SK-N-SH (cell line): ENCODE measurements at regions of chr15 and their contacts with region 1.

Region 1: DNA sequence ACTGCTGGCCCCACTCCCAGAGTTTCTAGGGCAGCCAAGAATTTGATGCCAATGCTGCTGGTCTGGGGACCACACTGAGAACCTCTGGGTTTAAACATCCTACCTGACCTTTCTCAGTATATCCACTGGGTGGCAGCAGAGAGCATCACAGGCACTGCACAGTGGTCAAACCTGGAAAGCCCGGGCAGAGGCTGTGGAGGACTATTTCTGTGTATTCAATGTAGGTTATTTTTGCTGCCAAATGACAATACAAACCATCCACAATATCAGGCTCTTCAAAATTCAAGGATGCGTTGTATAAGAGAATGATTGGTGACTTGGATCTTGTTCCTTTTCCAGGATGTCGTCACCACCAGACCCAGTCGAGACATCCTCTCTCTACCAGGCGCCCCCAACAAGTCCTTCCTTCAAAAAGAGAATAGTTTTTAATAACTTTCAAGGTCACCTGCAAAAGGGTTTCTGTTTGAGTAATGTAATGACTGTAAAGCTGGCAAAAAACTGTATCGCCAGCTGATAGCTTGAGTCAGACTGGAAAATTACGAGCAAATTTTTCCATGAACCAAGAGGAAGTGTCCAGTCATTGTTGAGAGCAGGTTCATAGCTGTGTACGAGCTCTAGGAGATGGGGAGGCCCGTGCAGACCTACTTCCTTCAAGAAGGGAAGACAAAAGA is 30.5 kb upstream of the MYZAP start:
- DNase-seq: peak; percentile 73
- H3K4me3 ChIP-seq: peak overlapping the region in 1 of 2 experiments; percentile 11; a peak in 1 of 4 replicates
- H3K27ac ChIP-seq: peak overlapping the region in 1 of 2 experiments; percentile 34; a peak in 1 of 4 replicates
- H3K4me1 ChIP-seq: peaks cover 0 to 9% of the 10 kb centered on the region in 2 experiments; a peak in 1 of 4 replicates
- H3K27me3 ChIP-seq: no peaks in the 10 kb centered on the region
- CTCF ChIP-seq: peak; percentile 91
- EP300 ChIP-seq: 0 out of 4 replicates have a peak, but pooled peaks of 1 of the 2 experiments have one; percentile 11
- RAD21 ChIP-seq: peak; percentile 86

Region 2: DNA sequence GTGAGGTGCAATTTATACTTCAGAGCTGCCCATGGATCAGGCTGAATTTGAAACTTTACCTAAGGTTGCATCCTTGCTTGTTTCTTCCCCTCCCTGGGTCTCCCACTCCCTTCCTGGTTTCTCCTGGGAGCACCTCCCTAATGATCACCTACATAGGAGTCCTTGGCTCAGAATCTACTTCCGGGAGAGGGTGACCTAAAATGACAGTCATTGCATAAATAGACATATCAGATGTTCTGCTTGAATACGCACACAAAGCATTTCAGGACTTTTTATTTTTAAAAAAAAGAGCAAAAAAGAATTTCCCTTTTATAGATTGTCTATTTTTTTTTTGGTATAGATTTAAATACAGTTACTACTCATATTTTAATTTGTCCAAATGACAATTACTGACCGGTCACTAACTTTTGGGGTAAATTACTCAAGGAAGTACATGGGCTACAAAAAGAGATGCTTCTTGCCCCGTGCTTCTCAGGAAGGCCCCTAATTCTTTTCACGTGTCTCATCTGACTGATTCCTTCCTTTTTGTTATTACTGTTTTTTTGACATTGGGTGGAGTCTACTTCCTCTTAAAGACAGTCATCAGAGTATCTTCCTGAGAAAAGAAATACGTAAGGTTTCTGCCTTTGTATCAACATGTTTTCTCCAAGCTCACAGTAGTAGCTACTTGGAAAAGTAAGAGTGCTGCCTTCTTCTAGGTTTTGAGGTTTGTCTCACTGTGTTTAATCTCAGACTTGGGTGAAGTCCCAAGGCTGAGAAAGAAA is 25.7 kb after region 1 on chr15:
- CTCF ChIA-PET with region 1: interaction called, 15 read pairs
- POLR2A ChIA-PET with region 1: no interaction called
- DNase-seq: no peak
- H3K4me3 ChIP-seq: no peak overlapping the region
- H3K27ac ChIP-seq: no peak overlapping the region
- H3K4me1 ChIP-seq: peaks cover 0 to 5% of the 10 kb centered on the region in 2 experiments; a peak in 1 of 4 replicates
- H3K27me3 ChIP-seq: peaks cover 7% of the 10 kb centered on the region; the same call in 1 of the 2 replicates
- CTCF ChIP-seq: no peak
- EP300 ChIP-seq: no peak
- RAD21 ChIP-seq: no peak

Region 3: DNA sequence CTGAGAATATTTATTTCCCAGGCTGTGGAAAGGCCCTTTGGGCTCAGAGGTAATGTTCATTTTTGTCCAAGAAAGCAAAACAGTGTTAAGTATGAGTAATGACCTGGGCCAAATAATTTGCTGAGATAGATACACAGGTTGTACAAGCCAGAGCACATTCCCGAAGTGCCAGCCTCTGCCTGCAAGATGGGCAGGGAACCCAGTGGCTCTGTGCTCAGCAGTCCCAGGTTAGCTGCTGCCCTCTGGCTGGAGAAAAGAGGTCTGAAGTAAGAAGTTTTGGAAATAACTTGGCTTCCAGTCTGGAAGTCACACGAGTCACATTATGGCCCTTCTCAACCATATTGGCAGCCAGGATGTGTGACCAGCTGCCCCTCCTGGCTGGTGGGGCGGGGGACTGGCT is 50.8 kb after region 1 on chr15:
- CTCF ChIA-PET with region 1: interaction called, 22 read pairs
- POLR2A ChIA-PET with region 1: no interaction called
- DNase-seq: peak; percentile 19
- H3K4me3 ChIP-seq: no peak overlapping the region
- H3K27ac ChIP-seq: no peak overlapping the region
- H3K4me1 ChIP-seq: peaks cover 0 to 4% of the 10 kb centered on the region in 2 experiments; a peak in 1 of 4 replicates
- H3K27me3 ChIP-seq: no peaks in the 10 kb centered on the region
- CTCF ChIP-seq: peak; percentile 28
- EP300 ChIP-seq: no peak
- RAD21 ChIP-seq: peak; percentile 65

Region 4: DNA sequence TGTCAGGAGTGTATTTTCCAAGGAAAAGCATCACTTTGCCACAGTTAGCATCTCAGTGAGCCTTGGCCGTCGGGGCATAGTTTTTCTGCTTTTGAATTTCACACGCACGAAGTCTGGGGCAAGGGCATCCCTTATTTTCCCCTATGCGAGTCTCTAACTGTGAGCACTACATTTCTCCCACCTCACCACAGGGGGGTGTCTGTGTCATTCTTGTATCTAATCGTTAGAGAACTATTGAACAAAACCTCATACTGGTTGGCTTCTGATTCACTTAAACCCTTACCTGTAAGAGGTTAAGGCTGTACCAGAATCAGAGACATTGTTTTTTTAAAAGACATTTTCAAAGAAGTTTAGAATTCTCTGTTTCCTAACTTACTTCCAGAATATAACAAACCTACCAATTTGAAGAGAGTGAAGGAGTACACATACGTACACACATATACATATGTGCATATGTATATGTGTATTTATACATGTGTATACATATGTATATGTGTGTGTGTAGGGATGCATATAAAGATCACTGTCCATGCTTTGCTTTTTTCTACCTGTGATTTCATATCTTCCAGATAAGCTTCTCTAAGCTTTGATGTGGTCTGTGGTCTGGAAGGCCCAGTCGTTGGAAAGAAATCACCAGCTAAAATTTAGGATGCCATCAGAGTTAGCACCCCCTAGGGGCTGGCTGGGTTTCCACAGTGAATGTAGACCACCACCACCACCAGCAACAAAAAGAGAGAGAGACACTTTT is 79.9 kb after region 1 on chr15:
- CTCF ChIA-PET with region 1: interaction called, 26 read pairs
- POLR2A ChIA-PET with region 1: no interaction called
- DNase-seq: peak; percentile 49
- H3K4me3 ChIP-seq: no peak overlapping the region
- H3K27ac ChIP-seq: no peak overlapping the region
- H3K4me1 ChIP-seq: no peaks in the 10 kb centered on the region
- H3K27me3 ChIP-seq: no peaks in the 10 kb centered on the region; the same call in 1 of the 2 replicates
- CTCF ChIP-seq: peak; percentile 59
- EP300 ChIP-seq: no peak
- RAD21 ChIP-seq: peak; percentile 63

Region 5: DNA sequence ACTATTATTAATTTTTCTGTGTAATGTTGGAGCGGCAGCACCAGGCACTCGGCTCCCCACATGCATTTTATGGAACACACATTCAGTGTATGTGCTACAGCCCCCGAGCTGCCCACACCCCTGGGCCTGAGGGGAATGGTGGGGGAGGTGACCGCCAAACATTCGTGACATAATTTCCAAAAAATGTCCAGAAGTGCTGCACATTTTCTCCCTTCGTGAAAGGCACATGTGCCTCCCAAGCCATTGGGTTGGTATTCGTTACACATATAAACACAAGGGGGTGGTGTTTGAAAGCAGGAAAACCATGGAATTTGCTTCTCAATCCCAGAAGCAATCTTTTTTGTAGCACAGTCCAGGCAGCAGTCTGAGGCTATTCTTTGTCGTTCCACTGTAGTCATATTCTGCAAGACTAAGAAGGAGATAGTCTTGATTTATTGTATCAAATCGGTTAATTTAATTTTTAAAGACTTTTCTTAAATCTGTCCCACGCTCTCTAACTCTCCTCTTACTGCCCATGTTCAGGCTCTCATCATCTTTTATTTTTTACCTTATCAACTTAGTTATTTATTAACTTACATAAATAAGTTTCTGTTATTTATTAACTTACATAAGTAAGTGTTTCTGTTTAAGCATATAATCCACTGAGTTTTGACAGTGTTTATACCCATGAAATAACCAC is 106.1 kb after region 1 on chr15:
- CTCF ChIA-PET with region 1: interaction called, 10 read pairs
- POLR2A ChIA-PET with region 1: no interaction called
- DNase-seq: peak; percentile 42
- H3K4me3 ChIP-seq: no peak overlapping the region
- H3K27ac ChIP-seq: no peak overlapping the region
- H3K4me1 ChIP-seq: peaks cover 0 to 2% of the 10 kb centered on the region in 2 experiments; a peak in 1 of 4 replicates
- H3K27me3 ChIP-seq: no peaks in the 10 kb centered on the region; the same call in 1 of the 2 replicates
- CTCF ChIP-seq: peak; percentile 68
- EP300 ChIP-seq: no peak
- RAD21 ChIP-seq: peak; percentile 78

Region 6: DNA sequence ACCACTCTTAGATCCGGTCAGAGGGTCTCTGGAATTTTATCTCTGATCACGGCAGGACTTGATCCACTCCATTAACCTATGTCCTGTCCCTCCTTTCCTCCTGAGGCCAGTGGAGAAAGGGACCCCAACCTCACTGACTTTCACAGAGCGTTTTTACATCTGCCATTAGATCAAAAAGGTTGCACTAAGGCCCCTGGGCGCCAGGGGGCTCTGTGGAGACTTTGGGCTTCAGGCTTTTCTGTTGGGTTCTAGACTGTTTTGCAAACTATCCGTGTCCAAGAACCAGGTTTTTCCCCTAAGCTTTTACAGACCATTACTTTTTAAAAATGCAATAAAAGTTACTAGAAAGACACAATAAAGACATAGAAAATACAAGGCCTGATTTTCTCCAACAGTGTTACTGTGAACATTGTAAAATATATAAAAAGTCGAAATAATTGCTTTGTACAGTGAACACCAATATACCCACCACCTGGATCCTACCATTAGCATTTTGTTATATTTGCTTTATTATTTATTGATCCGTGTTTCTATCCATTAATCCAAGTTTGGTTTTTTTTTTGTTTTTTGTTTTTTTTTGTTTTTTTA is 305.1 kb after region 1 on chr15:
- CTCF ChIA-PET with region 1: interaction called, 22 read pairs
- POLR2A ChIA-PET with region 1: no interaction called
- DNase-seq: peak; percentile 42
- H3K4me3 ChIP-seq: peak overlapping the region in 1 of 2 experiments; percentile 51; a peak in 1 of 4 replicates
- H3K27ac ChIP-seq: no peak overlapping the region
- H3K4me1 ChIP-seq: no peaks in the 10 kb centered on the region
- H3K27me3 ChIP-seq: no peaks in the 10 kb centered on the region
- CTCF ChIP-seq: peak; percentile 70
- EP300 ChIP-seq: no peak
- RAD21 ChIP-seq: peak; percentile 69